ENCODE measurements at regions of chr1 and their contacts with region 1.

Region 1: GRCh38 chr1:153510984-153511410 is 24.8 kb downstream of the S100A6 start:
- DNase-seq: no peak
- ATAC-seq: peak; percentile 97
- H3K4me3 ChIP-seq: no peak overlapping the region
- H3K27ac ChIP-seq: no peak overlapping the region
- H3K4me1 ChIP-seq: no peaks in the 10 kb centered on the region
- H3K27me3 ChIP-seq: no peaks in the 10 kb centered on the region
- CTCF ChIP-seq: peak; percentile 85 to 97 (median 91)
- EP300 ChIP-seq: no peak
- POLR2A ChIP-seq: no peak
- RAD21 ChIP-seq: peak; percentile 92

Region 2: GRCh38 chr1:153447498-153448170 is 63.4 kb before region 1 on chr1:
- CTCF ChIA-PET with region 1: no interaction called
- POLR2A ChIA-PET with region 1: no interaction called
- RAD21 ChIA-PET with region 1: no interaction called
- SMC1A ChIA-PET with region 1: no interaction called
- in situ Hi-C with region 1: no loop called
- intact Hi-C with region 1: no loop called
- DNase-seq: no peak
- ATAC-seq: no peak
- H3K4me3 ChIP-seq: no peak overlapping the region
- H3K27ac ChIP-seq: no peak overlapping the region
- H3K4me1 ChIP-seq: no peaks in the 10 kb centered on the region
- H3K27me3 ChIP-seq: peaks cover 0 to 2% of the 10 kb centered on the region in 2 experiments; a peak in 1 of 4 replicates
- CTCF ChIP-seq: no peak
- EP300 ChIP-seq: no peak
- POLR2A ChIP-seq: no peak
- RAD21 ChIP-seq: no peak

Region 3: DNA sequence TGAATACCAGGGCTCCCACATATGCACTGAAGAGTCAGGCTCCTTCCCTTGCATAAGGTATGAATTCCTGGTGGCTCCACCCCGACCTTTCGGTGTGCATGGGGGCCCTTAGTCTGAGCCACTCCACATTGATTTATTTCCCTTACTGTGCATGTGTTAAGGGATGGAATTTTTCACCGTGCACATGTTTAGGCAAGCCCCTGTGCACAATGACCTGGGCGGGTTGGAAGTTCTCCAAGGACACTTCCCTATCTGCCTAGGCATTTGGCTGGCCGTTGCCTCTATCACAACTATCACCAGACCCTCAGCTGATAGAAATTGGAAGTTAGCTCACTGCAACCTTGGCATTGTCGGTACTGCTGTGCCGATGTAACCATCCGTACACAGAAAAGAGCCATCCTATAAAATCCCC is 15.1 kb after region 1 on chr1:
- CTCF ChIA-PET with region 1: interaction called, 41 read pairs
- POLR2A ChIA-PET with region 1: no interaction called
- RAD21 ChIA-PET with region 1: interaction called, 5 read pairs
- SMC1A ChIA-PET with region 1: interaction called, 19 read pairs
- in situ Hi-C with region 1: no loop called
- intact Hi-C with region 1: no loop called
- DNase-seq: no peak
- ATAC-seq: no peak
- H3K4me3 ChIP-seq: no peak overlapping the region
- H3K27ac ChIP-seq: no peak overlapping the region
- H3K4me1 ChIP-seq: no peaks in the 10 kb centered on the region
- H3K27me3 ChIP-seq: 0 out of 4 replicates have a peak, but pooled peaks cover 0 to 3% of the 10 kb centered on the region in 2 experiments
- CTCF ChIP-seq: no peak
- EP300 ChIP-seq: no peak
- POLR2A ChIP-seq: no peak
- RAD21 ChIP-seq: no peak

Region 4: DNA sequence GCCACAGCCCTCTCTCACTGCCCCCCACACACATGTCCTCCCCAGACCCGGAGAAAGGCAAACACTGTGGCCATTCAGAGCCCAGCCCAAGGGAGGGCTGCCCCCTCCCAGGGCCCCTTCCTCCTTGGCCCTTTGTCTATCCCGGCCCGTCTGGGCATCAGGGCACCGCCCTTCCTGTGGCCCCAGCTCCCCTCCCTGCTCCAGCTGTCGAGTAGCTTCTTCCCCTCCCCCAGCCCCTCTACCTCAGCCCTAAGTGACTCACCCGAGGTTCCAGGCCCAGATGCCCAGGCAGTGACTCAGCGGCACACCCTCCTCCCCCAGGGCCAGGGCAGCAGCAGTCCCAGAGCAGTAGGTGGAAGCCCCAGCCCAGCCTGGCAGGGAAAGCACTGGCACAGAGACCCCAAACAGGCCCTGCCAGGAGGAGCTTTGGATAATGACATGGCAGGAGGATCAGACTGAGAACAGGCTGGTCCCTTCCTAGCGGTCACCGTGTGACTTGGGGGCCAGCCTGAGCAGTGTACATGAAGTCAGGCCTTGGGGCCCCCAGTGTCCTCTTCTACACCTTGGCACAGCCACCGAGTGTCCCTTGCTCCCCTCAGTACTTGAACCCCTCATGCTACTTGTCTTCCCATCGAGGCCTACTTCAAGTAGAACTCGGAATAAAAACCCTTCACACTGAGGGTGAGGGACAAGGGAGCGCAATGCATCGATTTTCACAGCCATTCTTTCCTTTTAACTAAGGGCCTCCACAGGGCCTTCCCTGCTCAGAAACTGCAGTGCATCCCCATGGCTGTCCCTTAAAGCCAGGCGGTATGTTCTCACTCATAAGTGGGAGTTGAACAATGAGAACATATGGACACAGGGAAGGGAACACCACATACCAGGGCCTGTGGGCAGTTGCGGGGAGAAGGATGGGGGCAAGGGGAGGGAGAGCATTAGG is 55.7 kb after region 1 on chr1:
- CTCF ChIA-PET with region 1: interaction called, 191 read pairs
- POLR2A ChIA-PET with region 1: no interaction called
- RAD21 ChIA-PET with region 1: interaction called, 59 read pairs
- SMC1A ChIA-PET with region 1: interaction called, 41 read pairs
- in situ Hi-C with region 1: loop called (anchors 5 kb)
- intact Hi-C with region 1: loop called (anchors 1 kb)
- DNase-seq: peak; percentile 37
- ATAC-seq: peak; percentile 79
- H3K4me3 ChIP-seq: no peak overlapping the region
- H3K27ac ChIP-seq: 0 out of 2 replicates have a peak overlapping the region, but pooled peaks have one; percentile 11
- H3K4me1 ChIP-seq: peaks cover 15% of the 10 kb centered on the region
- H3K27me3 ChIP-seq: no peaks in the 10 kb centered on the region
- CTCF ChIP-seq: no peak
- EP300 ChIP-seq: no peak
- POLR2A ChIP-seq: no peak; the same call in 1 of the 2 replicates
- RAD21 ChIP-seq: no peak

Region 5: GRCh38 chr1:153617675-153618074 is 106.7 kb after region 1 on chr1:
- CTCF ChIA-PET with region 1: interaction called, 19 read pairs
- POLR2A ChIA-PET with region 1: no interaction called
- RAD21 ChIA-PET with region 1: interaction called, 4 read pairs
- SMC1A ChIA-PET with region 1: interaction called, 12 read pairs
- in situ Hi-C with region 1: no loop called
- intact Hi-C with region 1: loop called (anchors 2 kb)
- DNase-seq: no peak
- ATAC-seq: peak; percentile 94
- H3K4me3 ChIP-seq: no peak overlapping the region
- H3K27ac ChIP-seq: no peak overlapping the region
- H3K4me1 ChIP-seq: peaks cover 15% of the 10 kb centered on the region
- H3K27me3 ChIP-seq: no peaks in the 10 kb centered on the region
- CTCF ChIP-seq: peak; percentile 49 to 69 (median 57)
- EP300 ChIP-seq: no peak
- POLR2A ChIP-seq: no peak
- RAD21 ChIP-seq: peak; percentile 36; the same call in 1 of the 2 replicates

Region 6: DNA sequence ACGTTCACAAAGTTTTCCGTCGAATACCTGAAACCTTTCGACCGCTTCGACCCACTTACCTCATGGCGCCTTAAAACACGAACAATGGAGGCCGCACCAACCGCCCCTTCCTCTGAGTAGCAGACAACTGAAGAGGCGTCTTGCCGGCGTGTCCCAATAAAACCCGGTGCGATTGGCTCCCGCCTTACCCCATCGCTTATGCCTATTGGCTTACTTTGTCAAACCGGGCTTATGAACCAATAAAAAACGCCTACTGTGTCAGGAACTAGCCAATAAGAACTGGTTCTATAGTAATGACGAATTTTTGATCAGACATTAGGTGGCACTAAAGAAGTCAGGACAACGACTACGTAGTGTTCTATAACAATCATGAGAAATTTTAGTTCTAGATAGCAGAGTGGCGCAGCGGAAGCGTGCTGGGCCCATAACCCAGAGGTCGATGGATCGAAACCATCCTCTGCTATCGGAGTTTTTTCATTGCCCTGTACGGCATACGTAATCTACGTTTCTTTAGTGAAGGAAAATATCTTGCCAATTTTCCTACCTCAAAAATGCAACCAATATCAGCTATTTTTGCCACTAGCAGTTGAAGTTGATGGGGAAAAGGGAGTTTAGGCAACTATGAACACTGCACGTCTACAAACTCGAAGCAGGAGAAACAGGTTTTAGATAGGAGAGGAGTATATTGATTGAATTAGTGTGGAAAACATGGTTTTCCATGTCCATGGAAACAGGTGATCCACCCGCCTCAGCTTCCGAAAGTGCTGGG is 160.0 kb after region 1 on chr1 and contains the start of gene ILF2:
- CTCF ChIA-PET with region 1: interaction called, 9 read pairs
- POLR2A ChIA-PET with region 1: no interaction called
- RAD21 ChIA-PET with region 1: interaction called, 7 read pairs
- SMC1A ChIA-PET with region 1: interaction called, 7 read pairs
- in situ Hi-C with region 1: no loop called
- intact Hi-C with region 1: loop called (anchors 5 kb)
- DNase-seq: peak; percentile 100
- ATAC-seq: peak; percentile 95
- H3K4me3 ChIP-seq: peak within 1 kb of the TSS; percentile 99
- H3K27ac ChIP-seq: peak within 1 kb of the TSS; percentile 85
- H3K4me1 ChIP-seq: peaks cover 4% of the 10 kb centered on the region; the same call in 1 of the 2 replicates
- H3K27me3 ChIP-seq: no peaks in the 10 kb centered on the region
- CTCF ChIP-seq: peak; percentile 13 to 47 (median 32); a peak in 4 of 6 replicates
- EP300 ChIP-seq: peak in 1 of 2 experiments; percentile 83; a peak in 1 of 4 replicates
- POLR2A ChIP-seq: peak; percentile 94
- RAD21 ChIP-seq: no peak
- polyA plus RNA-seq, gene ILF2: 444 to 455 TPM